H1 (cell line): ENCODE measurements at regions of chr7 and their contacts with region 1.

Region 1: DNA sequence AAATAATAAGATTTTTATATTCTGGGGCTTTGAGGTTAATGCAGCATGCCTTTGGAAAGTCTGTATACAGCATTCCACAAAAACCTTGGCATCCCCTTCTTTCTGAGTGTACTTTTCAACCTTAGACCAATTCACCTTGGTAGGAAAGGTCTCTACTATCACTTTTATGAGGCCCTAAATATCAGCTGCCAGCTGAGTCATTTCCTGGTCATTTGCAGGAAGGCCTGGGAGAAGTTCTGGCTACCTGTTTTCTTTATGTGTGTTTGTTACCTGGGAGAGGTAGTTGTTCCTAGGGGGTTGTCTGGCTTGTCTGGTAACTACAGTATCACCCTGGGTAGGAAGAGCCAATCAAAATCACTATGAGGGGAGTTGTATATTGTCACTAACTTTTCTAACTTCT is 4.1 kb downstream of the SPAM1 start:
- DNase-seq: no peak
- H3K4me3 ChIP-seq: no peak overlapping the region
- H3K27ac ChIP-seq: no peak overlapping the region
- H3K4me1 ChIP-seq: peaks cover 0 to 3% (median under 1%) of the 10 kb centered on the region in 4 experiments; a peak in 3 of 7 replicates
- H3K27me3 ChIP-seq: no peaks in the 10 kb centered on the region
- CTCF ChIP-seq: no peak
- EP300 ChIP-seq: no peak
- POLR2A ChIP-seq: no peak
- RAD21 ChIP-seq: no peak

Region 2: GRCh38 chr7:123805287-123805686 is 123.8 kb before region 1 on chr7:
- CTCF ChIA-PET with region 1: no interaction called
- POLR2A ChIA-PET with region 1: no interaction called
- DNase-seq: no peak
- H3K4me3 ChIP-seq: no peak overlapping the region
- H3K27ac ChIP-seq: no peak overlapping the region
- H3K4me1 ChIP-seq: no peaks in the 10 kb centered on the region
- H3K27me3 ChIP-seq: peaks cover 0 to 1% (median 0%) of the 10 kb centered on the region in 4 experiments; a peak in 1 of 7 replicates
- CTCF ChIP-seq: no peak
- EP300 ChIP-seq: no peak
- POLR2A ChIP-seq: no peak
- RAD21 ChIP-seq: no peak

Region 3: DNA sequence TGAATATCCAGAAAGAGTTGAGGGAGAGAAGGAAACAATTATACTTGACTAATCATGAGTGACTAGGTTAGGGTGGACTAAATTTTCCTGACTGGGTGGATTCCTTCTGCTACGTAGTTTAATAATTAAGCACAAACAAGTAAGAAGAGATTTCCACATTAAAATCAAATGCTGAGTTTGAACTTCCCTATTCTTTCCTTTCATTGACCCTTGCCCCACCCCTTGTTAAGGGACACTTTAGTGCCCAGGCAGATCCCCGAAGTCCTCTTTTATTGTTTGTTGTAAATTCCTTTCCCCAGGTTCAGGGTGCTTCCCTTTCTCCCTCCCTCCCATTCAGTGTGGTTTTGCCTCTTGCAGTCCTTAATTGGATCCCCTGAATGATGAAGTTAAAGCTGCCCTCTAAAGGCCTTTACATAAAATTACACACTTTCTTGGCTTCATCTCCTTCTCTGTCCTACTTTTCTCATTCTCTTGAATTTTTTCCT is 12.8 kb before region 1 on chr7:
- CTCF ChIA-PET with region 1: interaction called, 17 read pairs
- POLR2A ChIA-PET with region 1: no interaction called
- DNase-seq: peak in 1 of 2 experiments; percentile 39
- H3K4me3 ChIP-seq: no peak overlapping the region; a peak in 1 of 8 replicates
- H3K27ac ChIP-seq: no peak overlapping the region
- H3K4me1 ChIP-seq: no peaks in the 10 kb centered on the region
- H3K27me3 ChIP-seq: no peaks in the 10 kb centered on the region
- CTCF ChIP-seq: peak in 2 of 3 experiments; percentile 34 to 49; a peak in 2 of 4 replicates
- EP300 ChIP-seq: no peak
- POLR2A ChIP-seq: no peak
- RAD21 ChIP-seq: peak; percentile 49 to 60